IMR-90 (cell line): ENCODE measurements at regions of chr12 and their contacts with region 1.

Region 1: GRCh38 chr12:94980577-94980976 is 22.9 kb downstream of the NDUFA12 start:
- DNase-seq: peak; percentile 42
- ATAC-seq: no peak
- H3K4me3 ChIP-seq: no peak overlapping the region
- H3K27ac ChIP-seq: no peak overlapping the region
- H3K4me1 ChIP-seq: peaks cover 8% of the 10 kb centered on the region
- H3K27me3 ChIP-seq: no peaks in the 10 kb centered on the region
- CTCF ChIP-seq: peak; percentile 44
- POLR2A ChIP-seq: no peak
- RAD21 ChIP-seq: peak; percentile 51

Region 2: GRCh38 chr12:94941440-94941862 is 39.1 kb before region 1 on chr12:
- CTCF ChIA-PET with region 1: no interaction called
- POLR2A ChIA-PET with region 1: no interaction called
- dilution Hi-C with region 1: no loop called
- in situ Hi-C with region 1: no loop called
- intact Hi-C with region 1: no loop called
- DNase-seq: peak; percentile 79
- ATAC-seq: peak; percentile 66
- H3K4me3 ChIP-seq: no peak overlapping the region
- H3K27ac ChIP-seq: no peak overlapping the region
- H3K4me1 ChIP-seq: 0 out of 2 replicates have a peak, but pooled peaks cover 2% of the 10 kb centered on the region
- H3K27me3 ChIP-seq: no peaks in the 10 kb centered on the region
- CTCF ChIP-seq: no peak
- POLR2A ChIP-seq: no peak
- RAD21 ChIP-seq: no peak

Region 3: DNA sequence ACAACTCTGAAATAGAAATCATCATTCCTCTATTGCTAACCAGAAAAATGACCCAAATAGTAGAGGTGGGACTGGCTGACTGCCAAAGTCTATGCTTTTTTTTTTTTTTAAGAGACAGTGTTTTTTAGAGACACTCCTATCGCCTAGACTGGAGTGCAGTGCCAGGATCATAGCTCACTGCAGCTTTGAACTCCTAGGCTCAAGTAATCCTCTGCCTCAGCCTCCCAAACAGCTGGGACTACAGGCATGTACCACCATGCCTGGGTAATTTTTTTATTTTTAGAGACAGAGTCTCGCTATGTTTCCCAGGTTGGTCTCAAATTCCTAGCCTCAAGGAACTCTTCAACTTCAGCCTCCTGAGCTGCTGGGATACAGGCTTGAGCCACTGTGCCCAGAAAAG is 73.6 kb after region 1 on chr12:
- CTCF ChIA-PET with region 1: no interaction called
- POLR2A ChIA-PET with region 1: interaction called, 11 read pairs
- dilution Hi-C with region 1: no loop called
- in situ Hi-C with region 1: no loop called
- intact Hi-C with region 1: no loop called
- DNase-seq: no peak
- ATAC-seq: no peak
- H3K4me3 ChIP-seq: no peak overlapping the region
- H3K27ac ChIP-seq: no peak overlapping the region
- H3K4me1 ChIP-seq: no peaks in the 10 kb centered on the region
- H3K27me3 ChIP-seq: no peaks in the 10 kb centered on the region
- CTCF ChIP-seq: no peak
- POLR2A ChIP-seq: no peak
- RAD21 ChIP-seq: no peak

Region 4: DNA sequence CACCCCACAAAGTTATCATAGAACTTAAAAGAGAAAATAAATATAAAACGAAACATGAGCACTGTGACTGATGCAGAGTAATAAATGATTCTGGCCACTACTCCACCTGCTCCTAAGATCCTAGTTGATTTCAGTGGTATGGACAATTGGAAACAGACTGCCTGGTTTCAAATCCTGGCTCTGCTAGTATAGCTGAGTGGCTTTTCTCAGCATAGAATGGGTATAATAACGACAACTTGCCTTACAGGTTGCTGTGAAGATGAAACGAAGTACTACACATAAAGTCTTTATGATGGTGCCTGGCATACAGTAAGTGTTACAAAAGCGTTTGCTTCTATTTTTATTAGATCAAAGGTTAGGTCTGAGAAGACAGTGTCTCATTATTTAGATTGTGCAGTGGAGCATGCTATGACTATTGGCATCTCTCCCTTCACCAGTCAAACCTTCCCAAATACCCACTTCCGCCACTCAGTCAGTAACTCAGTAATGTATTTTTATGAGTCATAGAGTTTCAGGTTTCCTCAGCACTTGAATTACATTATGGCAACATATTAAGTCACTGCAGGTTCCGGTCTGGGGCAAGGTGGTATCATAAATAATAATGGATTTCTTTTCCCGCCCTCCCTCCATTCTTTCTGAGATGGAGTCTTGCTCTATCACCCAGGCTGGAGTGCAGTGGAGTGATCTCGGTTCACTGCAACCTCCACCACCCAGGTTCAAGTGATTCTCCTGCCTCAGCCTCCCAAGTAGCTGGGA is 122.5 kb after region 1 on chr12:
- CTCF ChIA-PET with region 1: no interaction called
- POLR2A ChIA-PET with region 1: no interaction called
- dilution Hi-C with region 1: no loop called
- in situ Hi-C with region 1: no loop called
- intact Hi-C with region 1: no loop called
- DNase-seq: peak; percentile 94
- ATAC-seq: peak; percentile 79
- H3K4me3 ChIP-seq: no peak overlapping the region
- H3K27ac ChIP-seq: no peak overlapping the region
- H3K4me1 ChIP-seq: peaks cover 5% of the 10 kb centered on the region
- H3K27me3 ChIP-seq: no peaks in the 10 kb centered on the region
- CTCF ChIP-seq: no peak
- POLR2A ChIP-seq: no peak
- RAD21 ChIP-seq: no peak